ENCODE measurements at regions of chr1 and their contacts with region 1.

Region 1: DNA sequence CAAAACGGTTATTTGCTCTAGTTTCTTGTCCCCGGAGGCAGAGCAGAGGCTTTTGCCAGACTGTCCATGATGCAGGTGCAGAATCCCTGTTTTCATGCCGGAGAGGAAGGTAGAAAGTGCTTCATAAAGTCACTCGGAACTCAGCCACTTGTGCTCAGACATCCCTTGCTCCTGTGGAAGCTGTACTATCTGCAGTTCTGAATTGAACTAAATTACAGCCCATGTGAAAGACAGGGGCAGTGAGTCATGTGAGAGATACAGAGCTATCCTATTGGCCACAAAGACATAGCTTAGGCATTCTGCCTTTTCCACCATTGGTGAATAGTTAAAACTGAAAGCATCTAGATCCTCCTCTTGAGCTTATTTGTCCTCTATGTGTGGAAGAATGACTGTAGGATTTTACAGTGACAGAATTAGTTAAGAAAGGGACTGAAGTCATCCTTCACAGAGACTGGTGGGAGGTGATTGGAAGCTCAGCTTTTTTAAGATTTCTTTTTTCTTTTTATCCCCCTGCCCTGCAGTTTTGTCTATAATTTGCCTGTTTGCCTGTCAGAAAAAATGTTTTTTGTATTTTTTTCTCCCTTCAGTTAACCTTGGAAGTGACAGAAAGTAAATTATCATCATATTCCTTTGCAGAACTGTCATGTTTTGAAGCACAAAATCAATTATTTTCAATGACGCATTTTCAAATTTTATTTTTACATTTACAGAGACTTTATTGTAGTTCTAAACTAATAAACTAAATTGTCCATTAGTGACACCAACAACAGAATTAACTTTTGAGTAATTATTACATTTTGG is 298.6 kb downstream of the PTPRC start:
- DNase-seq: peak in 8 of 9 donors; percentile 52 to 81 (median 72)
- ATAC-seq: peak; percentile 92
- H3K4me3 ChIP-seq: peak overlapping the region; percentile 47
- H3K4me3 Mint-ChIP-seq: peak overlapping the region in 3 of 10 donors; percentile 88 to 97 (median 92)
- H3K27ac ChIP-seq: peak overlapping the region; percentile 75
- H3K27ac Mint-ChIP-seq: peak overlapping the region in 7 of 9 donors; percentile 88 to 97 (median 92)
- H3K4me1 ChIP-seq: peaks cover 16 to 23% of the 10 kb centered on the region in 2 donors
- H3K4me1 Mint-ChIP-seq: peaks cover 6 to 28% (median 22%) of the 10 kb centered on the region in 7 donors
- H3K27me3 ChIP-seq: no peaks in the 10 kb centered on the region
- H3K27me3 Mint-ChIP-seq: no peaks in the 10 kb centered on the region

Region 2: DNA sequence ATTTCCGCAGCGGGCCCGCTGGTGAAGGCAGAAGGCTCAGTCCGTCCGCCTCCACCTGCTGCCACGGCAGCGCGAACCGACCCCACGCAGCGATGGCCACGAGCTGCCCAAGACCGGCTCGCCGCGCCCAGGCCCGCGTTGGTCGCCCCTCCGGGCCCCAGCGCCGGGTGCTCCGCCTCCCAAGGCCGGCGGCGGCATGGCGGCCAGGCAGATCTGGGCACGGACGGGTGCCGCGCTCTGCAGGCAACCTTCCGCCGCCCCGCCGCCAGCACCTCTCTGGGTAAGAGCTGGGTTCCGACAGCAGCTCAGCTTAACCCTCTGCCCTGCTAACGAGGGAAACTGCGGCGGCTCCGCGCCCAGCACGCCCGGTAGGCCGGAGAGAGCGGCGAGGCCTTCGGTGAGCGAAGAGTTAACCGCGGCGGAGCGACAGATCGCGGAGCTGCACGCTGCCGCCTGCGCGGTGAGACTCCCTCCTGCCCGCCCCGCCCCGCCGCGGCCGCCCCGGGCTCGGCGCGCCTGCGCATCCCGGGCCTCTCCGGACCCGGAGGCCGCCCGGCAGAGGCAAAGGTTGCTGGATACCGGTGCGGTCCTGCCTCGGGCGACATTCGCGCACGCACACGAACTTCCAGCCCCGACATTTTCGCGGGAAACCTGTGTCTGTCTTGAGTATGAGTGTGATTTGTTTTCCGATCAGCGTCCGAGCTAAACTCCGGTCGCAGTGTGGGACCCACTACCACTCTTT is 1034.8 kb before region 1 on chr1 and contains the start of gene C1orf53:
- CTCF ChIA-PET with region 1: no interaction called
- POLR2A ChIA-PET with region 1: no interaction called
- intact Hi-C with region 1: loop called in 1 of 2 experiments (anchors 10 kb)
- DNase-seq: peak; percentile 58 to 87 (median 74)
- ATAC-seq: peak; percentile 94
- H3K4me3 ChIP-seq: peak within 1 kb of the TSS; percentile 71
- H3K4me3 Mint-ChIP-seq: peak within 1 kb of the TSS; percentile 79 to 97 (median 92)
- H3K27ac ChIP-seq: peak within 1 kb of the TSS; percentile 50
- H3K27ac Mint-ChIP-seq: peak within 1 kb of the TSS; percentile 7 to 82 (median 79)
- H3K4me1 ChIP-seq: peaks cover 4% of the 10 kb centered on the region in 2 donors
- H3K4me1 Mint-ChIP-seq: peaks cover 6 to 19% (median 14%) of the 10 kb centered on the region in 7 donors
- H3K27me3 ChIP-seq: peaks cover 0 to 23% of the 10 kb centered on the region in 2 donors
- H3K27me3 Mint-ChIP-seq: peaks cover 46 to 68% (median 54%) of the 10 kb centered on the region in 5 donors
- total RNA-seq, gene C1orf53: not detected

Region 3: GRCh38 chr1:198612471-198613260 is 324.8 kb before region 1 on chr1:
- CTCF ChIA-PET with region 1: no interaction called
- POLR2A ChIA-PET with region 1: no interaction called
- intact Hi-C with region 1: loop called in 1 of 2 experiments (anchors 10 kb)
- DNase-seq: peak in 6 of 9 donors; percentile 30 to 52 (median 41)
- ATAC-seq: peak; percentile 62
- H3K4me3 ChIP-seq: peak overlapping the region; percentile 44
- H3K4me3 Mint-ChIP-seq: peak overlapping the region; percentile 66 to 97 (median 82)
- H3K27ac ChIP-seq: peak overlapping the region; percentile 82
- H3K27ac Mint-ChIP-seq: peak overlapping the region; percentile 95 to 100 (median 98)
- H3K4me1 ChIP-seq: peaks cover 56 to 71% of the 10 kb centered on the region in 2 donors
- H3K4me1 Mint-ChIP-seq: peaks cover 52 to 92% (median 73%) of the 10 kb centered on the region in 7 donors
- H3K27me3 ChIP-seq: no peaks in the 10 kb centered on the region
- H3K27me3 Mint-ChIP-seq: no peaks in the 10 kb centered on the region

Region 4: GRCh38 chr1:198756470-198756869 is 181.0 kb before region 1 on chr1:
- CTCF ChIA-PET with region 1: no interaction called
- POLR2A ChIA-PET with region 1: no interaction called
- intact Hi-C with region 1: loop called in 1 of 2 experiments (anchors 5 kb)
- DNase-seq: no peak
- ATAC-seq: peak; percentile 41
- H3K4me3 ChIP-seq: no peak overlapping the region
- H3K4me3 Mint-ChIP-seq: no peak overlapping the region
- H3K27ac ChIP-seq: no peak overlapping the region
- H3K27ac Mint-ChIP-seq: peak overlapping the region in 4 of 9 donors; percentile 10 to 81 (median 34)
- H3K4me1 ChIP-seq: no peaks in the 10 kb centered on the region
- H3K4me1 Mint-ChIP-seq: peaks cover 5 to 36% (median 21%) of the 10 kb centered on the region in 7 donors
- H3K27me3 ChIP-seq: no peaks in the 10 kb centered on the region
- H3K27me3 Mint-ChIP-seq: no peaks in the 10 kb centered on the region

Region 5: DNA sequence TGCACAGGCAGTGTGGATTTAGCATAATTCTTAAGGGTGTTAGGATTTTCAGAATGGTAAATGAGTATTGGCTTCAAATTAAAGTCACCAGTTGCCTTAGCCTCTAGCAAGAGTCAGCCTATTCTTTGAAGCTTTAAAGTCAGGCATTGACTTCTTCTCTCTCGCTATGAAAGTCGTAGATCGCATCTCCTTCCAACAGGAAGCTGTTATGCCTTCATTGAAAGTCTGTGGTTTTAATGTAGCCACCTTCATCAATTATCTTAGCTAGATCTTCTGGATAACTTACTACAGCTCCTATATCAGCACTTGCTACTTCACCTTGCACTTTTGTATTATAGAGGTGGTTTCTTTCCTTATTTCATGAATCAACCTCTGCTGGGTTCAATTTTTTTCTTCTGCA is 21.6 kb after region 1 on chr1:
- CTCF ChIA-PET with region 1: no interaction called
- POLR2A ChIA-PET with region 1: interaction called, 3 read pairs
- intact Hi-C with region 1: loop called (anchors 1 kb)
- DNase-seq: peak in 6 of 9 donors; percentile 27 to 56 (median 42)
- ATAC-seq: peak; percentile 71
- H3K4me3 ChIP-seq: no peak overlapping the region
- H3K4me3 Mint-ChIP-seq: peak overlapping the region in 5 of 10 donors; percentile 20 to 49 (median 31)
- H3K27ac ChIP-seq: no peak overlapping the region
- H3K27ac Mint-ChIP-seq: peak overlapping the region; percentile 3 to 73 (median 59)
- H3K4me1 ChIP-seq: peaks cover 6 to 20% of the 10 kb centered on the region in 2 donors
- H3K4me1 Mint-ChIP-seq: peaks cover 18 to 41% (median 36%) of the 10 kb centered on the region in 7 donors
- H3K27me3 ChIP-seq: no peaks in the 10 kb centered on the region
- H3K27me3 Mint-ChIP-seq: no peaks in the 10 kb centered on the region

Region 6: GRCh38 chr1:199089393-199090122 is 152.1 kb after region 1 on chr1:
- CTCF ChIA-PET with region 1: no interaction called
- POLR2A ChIA-PET with region 1: no interaction called
- intact Hi-C with region 1: loop called (anchors 1 to 5 kb)
- DNase-seq: peak in 8 of 9 donors; percentile 25 to 72 (median 48)
- ATAC-seq: peak; percentile 99
- H3K4me3 ChIP-seq: no peak overlapping the region
- H3K4me3 Mint-ChIP-seq: peak overlapping the region in 8 of 10 donors; percentile 7 to 53 (median 48)
- H3K27ac ChIP-seq: no peak overlapping the region
- H3K27ac Mint-ChIP-seq: peak overlapping the region in 2 of 9 donors; percentile 20 to 80
- H3K4me1 ChIP-seq: peaks cover 10 to 21% of the 10 kb centered on the region in 2 donors
- H3K4me1 Mint-ChIP-seq: peaks cover 4 to 43% (median 19%) of the 10 kb centered on the region in 7 donors
- H3K27me3 ChIP-seq: no peaks in the 10 kb centered on the region
- H3K27me3 Mint-ChIP-seq: peaks cover 0 to 4% (median 0%) of the 10 kb centered on the region in 5 donors

Region 7: GRCh38 chr1:199226163-199226562 is 288.7 kb after region 1 on chr1:
- CTCF ChIA-PET with region 1: no interaction called
- POLR2A ChIA-PET with region 1: no interaction called
- intact Hi-C with region 1: loop called in 1 of 2 experiments (anchors 2 kb)
- DNase-seq: peak in 7 of 9 donors; percentile 10 to 66 (median 30)
- ATAC-seq: peak; percentile 91
- H3K4me3 ChIP-seq: no peak overlapping the region
- H3K4me3 Mint-ChIP-seq: peak overlapping the region in 8 of 10 donors; percentile 2 to 72 (median 36)
- H3K27ac ChIP-seq: no peak overlapping the region
- H3K27ac Mint-ChIP-seq: peak overlapping the region; percentile 5 to 91 (median 56)
- H3K4me1 ChIP-seq: peaks cover 0 to 6% of the 10 kb centered on the region in 2 donors
- H3K4me1 Mint-ChIP-seq: peaks cover 9 to 23% (median 14%) of the 10 kb centered on the region in 7 donors
- H3K27me3 ChIP-seq: no peaks in the 10 kb centered on the region
- H3K27me3 Mint-ChIP-seq: no peaks in the 10 kb centered on the region

Region 8: DNA sequence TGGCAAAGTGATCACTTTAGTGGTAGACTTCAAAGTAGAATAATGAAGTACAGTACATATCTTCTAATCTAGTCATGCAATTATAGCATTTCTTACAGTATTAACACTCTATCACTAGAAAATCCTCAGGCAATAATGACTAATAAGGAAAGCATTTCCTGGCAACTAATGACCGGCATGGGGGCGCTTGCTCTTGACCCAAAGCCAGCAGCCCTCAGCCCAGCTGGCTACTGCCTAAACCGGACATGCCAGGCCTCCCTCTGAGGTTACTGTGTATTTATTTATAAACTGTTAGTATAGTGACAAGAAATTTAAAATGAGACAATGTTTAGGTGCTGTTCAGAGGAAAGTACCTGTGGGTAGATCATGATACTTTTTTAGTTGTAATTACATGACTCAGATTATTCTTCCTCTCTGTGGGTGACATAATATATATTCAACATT is 335.2 kb after region 1 on chr1:
- CTCF ChIA-PET with region 1: no interaction called
- POLR2A ChIA-PET with region 1: no interaction called
- intact Hi-C with region 1: no loop called
- DNase-seq: no peak
- ATAC-seq: no peak
- H3K4me3 ChIP-seq: no peak overlapping the region
- H3K4me3 Mint-ChIP-seq: no peak overlapping the region
- H3K27ac ChIP-seq: no peak overlapping the region
- H3K27ac Mint-ChIP-seq: no peak overlapping the region
- H3K4me1 ChIP-seq: no peaks in the 10 kb centered on the region
- H3K4me1 Mint-ChIP-seq: peaks cover 0 to 4% (median 0%) of the 10 kb centered on the region in 7 donors
- H3K27me3 ChIP-seq: no peaks in the 10 kb centered on the region
- H3K27me3 Mint-ChIP-seq: peaks cover 0 to 9% (median 4%) of the 10 kb centered on the region in 5 donors

Measured in naive thymus-derived CD4-positive, alpha-beta T cell (primary cell).